Naive thymus-derived CD8-positive, alpha-beta T cell (primary cell): ENCODE measurements at regions of chr16 and their contacts with region 1.

Region 1: DNA sequence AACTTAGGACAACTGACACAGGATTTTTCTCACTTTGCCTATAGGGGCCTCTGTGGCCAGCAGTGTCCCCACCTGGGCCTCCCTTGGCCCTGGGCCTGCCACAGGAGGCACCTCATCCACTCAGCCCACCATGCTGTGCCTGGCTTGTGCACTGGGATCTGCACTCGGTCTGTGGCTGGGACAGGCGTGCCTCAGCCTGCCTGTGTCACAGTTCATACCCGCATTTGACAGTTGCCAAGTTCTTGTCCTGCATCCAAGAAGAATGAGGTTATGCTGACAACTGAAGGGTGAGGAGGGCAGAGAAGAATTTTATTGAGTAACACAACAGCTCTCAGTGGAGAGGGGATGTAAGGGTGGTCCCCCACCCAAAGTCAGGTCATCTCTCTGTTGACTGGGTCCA is 36.0 kb downstream of the ZFP90 start:
- DNase-seq: no peak
- ATAC-seq: no peak
- H3K4me3 Mint-ChIP-seq: no peak overlapping the region
- H3K27ac Mint-ChIP-seq: no peak overlapping the region
- H3K4me1 Mint-ChIP-seq: peaks cover 0 to under 1% (median 0%) of the 10 kb centered on the region in 4 donors
- H3K27me3 Mint-ChIP-seq: no peaks in the 10 kb centered on the region

Region 2: DNA sequence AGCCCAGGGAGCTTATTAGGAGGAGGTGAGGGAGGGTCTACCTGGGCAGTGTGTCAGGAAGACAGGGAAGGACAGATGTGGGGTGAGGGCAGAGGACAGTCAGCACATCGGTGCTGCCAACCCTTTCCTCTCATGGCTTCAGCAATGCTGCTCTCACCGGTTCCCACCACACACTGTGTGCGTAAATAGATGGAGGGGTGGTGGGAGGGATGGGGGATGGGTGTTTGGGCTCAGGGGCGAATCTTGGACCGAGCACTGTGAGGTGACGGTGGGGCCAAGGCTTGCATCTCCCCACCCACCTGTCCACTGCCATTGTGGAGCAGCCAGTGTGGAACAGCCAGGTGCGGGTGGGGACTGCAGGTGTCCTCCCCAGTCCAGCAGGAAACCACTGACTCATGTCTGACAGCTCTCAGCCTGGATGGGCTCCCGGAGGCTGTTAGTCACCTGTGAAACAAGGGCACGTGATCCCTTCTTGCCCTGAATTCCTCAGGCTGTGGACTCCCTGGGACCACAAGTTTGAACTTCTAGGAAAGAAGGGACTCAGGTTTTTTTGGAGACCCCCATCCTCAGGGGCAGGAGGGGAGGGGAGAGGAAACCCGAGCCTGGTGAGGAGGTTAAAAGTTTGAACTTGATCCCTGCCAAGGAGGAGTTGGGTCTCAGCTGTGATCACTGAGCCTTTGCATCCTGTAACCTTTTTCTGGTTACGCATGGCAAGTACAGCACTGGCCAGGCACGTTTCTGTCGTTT is 84.1 kb before region 1 on chr16:
- POLR2A ChIA-PET with region 1: no interaction called
- DNase-seq: no peak
- ATAC-seq: no peak
- H3K4me3 Mint-ChIP-seq: no peak overlapping the region
- H3K27ac Mint-ChIP-seq: peak overlapping the region in 1 of 10 donors; percentile 57
- H3K4me1 Mint-ChIP-seq: peaks cover 0 to 15% (median 1%) of the 10 kb centered on the region in 4 donors
- H3K27me3 Mint-ChIP-seq: peaks cover 0 to 5% (median 0%) of the 10 kb centered on the region in 5 donors

Region 3: GRCh38 chr16:68548947-68549346 is 26.1 kb before region 1 on chr16:
- POLR2A ChIA-PET with region 1: interaction called, 10 read pairs
- DNase-seq: peak in 9 of 10 donors; percentile 11 to 83 (median 64)
- ATAC-seq: peak; percentile 99 to 100
- H3K4me3 Mint-ChIP-seq: peak overlapping the region; percentile 41 to 79 (median 69)
- H3K27ac Mint-ChIP-seq: peak overlapping the region; percentile 80 to 97 (median 95)
- H3K4me1 Mint-ChIP-seq: peaks cover 18 to 39% (median 23%) of the 10 kb centered on the region in 4 donors
- H3K27me3 Mint-ChIP-seq: no peaks in the 10 kb centered on the region